ENCODE measurements at regions of chr7 and their contacts with region 1.

Region 1: GRCh38 chr7:90661290-90662151 is 65.4 kb downstream of the CDK14 start:
- DNase-seq: no peak
- ATAC-seq: 0 out of 2 replicates have a peak, but pooled peaks have one; percentile 16
- H3K4me3 ChIP-seq: no peak overlapping the region
- H3K27ac ChIP-seq: no peak overlapping the region
- H3K4me1 ChIP-seq: no peaks in the 10 kb centered on the region; the same call in 1 of the 2 replicates
- H3K27me3 ChIP-seq: no peaks in the 10 kb centered on the region
- CTCF ChIP-seq: no peak

Region 2: DNA sequence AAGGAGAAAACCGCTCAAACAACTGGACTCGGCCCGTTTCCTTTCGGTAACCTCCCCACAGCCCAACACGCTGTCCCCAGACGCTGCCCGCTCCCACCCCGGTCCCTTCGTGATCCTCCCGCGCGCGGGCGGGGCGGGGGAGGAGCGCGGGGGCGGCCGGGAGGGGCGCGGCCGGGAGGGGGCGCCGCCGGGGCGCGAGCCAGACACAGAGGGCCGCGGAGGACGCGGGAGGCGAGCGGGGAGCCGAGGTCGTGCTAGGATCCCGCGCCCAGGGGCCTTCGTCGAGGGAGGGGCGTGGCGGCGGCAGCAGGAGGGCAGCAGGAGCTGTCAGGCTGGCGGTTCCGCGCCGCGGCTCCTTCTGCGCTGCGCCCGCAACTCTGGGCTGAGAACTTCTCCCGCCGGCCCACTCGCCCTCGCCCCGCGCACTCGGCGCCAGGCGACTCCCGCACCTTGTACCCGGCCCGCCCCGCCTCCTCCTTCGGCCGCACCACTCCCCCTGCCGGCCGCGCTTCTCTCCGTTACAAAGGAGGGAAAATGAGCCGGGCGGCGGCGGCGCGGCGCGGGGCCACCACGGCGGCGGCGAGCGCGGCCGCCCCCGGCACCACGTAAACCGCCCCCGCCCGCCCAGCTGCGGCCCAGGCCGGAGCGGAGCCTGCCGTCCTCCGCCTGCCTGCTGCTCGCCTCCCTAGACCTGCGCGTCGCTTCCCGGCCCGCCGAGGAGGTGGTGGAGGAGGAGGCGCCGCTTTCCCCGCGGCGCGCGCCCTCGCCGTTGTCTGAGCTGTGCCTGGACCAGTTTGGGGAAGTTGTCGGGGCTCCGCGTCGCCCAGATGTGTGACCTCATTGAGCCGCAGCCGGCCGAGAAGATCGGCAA is 65.5 kb before region 1 on chr7 and contains the start of gene CDK14:
- CTCF ChIA-PET with region 1: no interaction called
- POLR2A ChIA-PET with region 1: no interaction called
- intact Hi-C with region 1: no loop called
- DNase-seq: peak; percentile 59
- ATAC-seq: peak; percentile 42
- H3K4me3 ChIP-seq: peak within 1 kb of the TSS; percentile 90
- H3K27ac ChIP-seq: peak within 1 kb of the TSS; percentile 89
- H3K4me1 ChIP-seq: peaks cover 32% of the 10 kb centered on the region
- H3K27me3 ChIP-seq: no peaks in the 10 kb centered on the region
- CTCF ChIP-seq: peak; percentile 26; the same call in 1 of the 2 replicates
- total RNA-seq, gene CDK14: 6.6 and 8.2 TPM in 2 replicates

Region 3: GRCh38 chr7:90900628-90901356 is 239.3 kb after region 1 on chr7:
- CTCF ChIA-PET with region 1: no interaction called
- POLR2A ChIA-PET with region 1: no interaction called
- intact Hi-C with region 1: loop called (anchors 10 kb)
- DNase-seq: no peak
- ATAC-seq: no peak
- H3K4me3 ChIP-seq: no peak overlapping the region
- H3K27ac ChIP-seq: no peak overlapping the region
- H3K4me1 ChIP-seq: peaks cover 5% of the 10 kb centered on the region
- H3K27me3 ChIP-seq: no peaks in the 10 kb centered on the region
- CTCF ChIP-seq: no peak